ENCODE measurements at regions of chr5 and their contacts with region 1.

Region 1: GRCh38 chr5:138789771-138790242 is 36.6 kb downstream of the CTNNA1 start:
- DNase-seq: no peak
- ATAC-seq: peak; percentile 23
- H3K4me3 Mint-ChIP-seq: no peak overlapping the region
- H3K27ac Mint-ChIP-seq: no peak overlapping the region
- H3K4me1 Mint-ChIP-seq: peaks cover 16% of the 10 kb centered on the region
- H3K27me3 Mint-ChIP-seq: no peaks in the 10 kb centered on the region

Region 2: GRCh38 chr5:138469540-138470321 is 320.1 kb before region 1 on chr5:
- CTCF ChIA-PET with region 1: no interaction called
- DNase-seq: no peak
- ATAC-seq: no peak
- H3K4me3 Mint-ChIP-seq: no peak overlapping the region
- H3K27ac Mint-ChIP-seq: no peak overlapping the region
- H3K4me1 Mint-ChIP-seq: peaks cover 9% of the 10 kb centered on the region
- H3K27me3 Mint-ChIP-seq: peaks cover 23% of the 10 kb centered on the region

Region 3: GRCh38 chr5:138803285-138803684 is 13.5 kb after region 1 on chr5:
- CTCF ChIA-PET with region 1: interaction called, 14 read pairs
- DNase-seq: no peak
- ATAC-seq: no peak
- H3K4me3 Mint-ChIP-seq: no peak overlapping the region
- H3K27ac Mint-ChIP-seq: no peak overlapping the region
- H3K4me1 Mint-ChIP-seq: peaks cover 9% of the 10 kb centered on the region
- H3K27me3 Mint-ChIP-seq: no peaks in the 10 kb centered on the region

Region 4: GRCh38 chr5:138809391-138809790 is 19.6 kb after region 1 on chr5:
- CTCF ChIA-PET with region 1: interaction called, 10 read pairs
- DNase-seq: no peak
- ATAC-seq: no peak
- H3K4me3 Mint-ChIP-seq: no peak overlapping the region
- H3K27ac Mint-ChIP-seq: no peak overlapping the region
- H3K4me1 Mint-ChIP-seq: peaks cover 9% of the 10 kb centered on the region
- H3K27me3 Mint-ChIP-seq: no peaks in the 10 kb centered on the region

Region 5: DNA sequence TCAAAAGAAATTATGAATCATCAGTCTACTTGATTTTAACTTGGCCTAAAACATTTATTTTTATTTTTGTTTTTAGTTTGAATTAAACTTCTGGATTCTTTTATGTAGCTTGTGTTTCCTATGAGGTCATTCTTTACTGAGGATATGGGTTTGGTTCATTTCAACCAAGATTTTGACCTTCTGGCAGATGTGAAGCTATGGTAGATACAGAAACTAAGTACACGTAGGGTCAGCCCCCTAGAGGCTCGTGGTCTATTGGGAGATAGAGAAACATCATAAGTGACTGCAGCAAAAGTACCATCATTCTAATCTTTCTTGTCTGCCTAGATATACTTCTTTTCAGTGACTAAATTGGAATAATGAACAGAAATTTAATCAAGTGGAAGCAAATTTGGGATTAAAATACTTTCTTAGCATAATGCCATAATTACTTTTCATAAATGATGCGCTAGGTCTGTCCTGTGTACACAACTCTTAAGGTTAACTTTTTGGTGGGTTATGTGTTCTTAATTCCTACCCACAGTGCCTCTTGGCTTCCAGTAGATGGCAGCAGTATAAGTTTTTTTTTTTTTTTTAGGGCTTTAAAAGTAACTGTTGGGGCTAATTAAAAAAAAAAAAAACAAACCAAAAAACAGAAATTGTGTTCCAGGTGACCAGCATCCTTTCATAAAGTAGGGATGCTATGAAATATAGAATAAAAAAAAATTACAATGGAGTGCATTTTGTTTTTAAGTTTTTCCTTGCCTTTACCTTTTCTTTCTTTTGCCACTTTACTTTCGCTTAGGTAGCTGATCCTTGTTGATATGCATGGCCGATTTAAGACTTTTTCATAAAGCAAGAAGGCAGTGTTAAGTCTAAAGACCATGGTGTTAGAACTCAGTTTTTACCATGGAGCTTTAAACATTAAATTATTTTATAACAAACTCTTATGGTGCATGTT is 35.4 kb after region 1 on chr5:
- CTCF ChIA-PET with region 1: interaction called, 11 read pairs
- DNase-seq: no peak
- ATAC-seq: peak; percentile 30
- H3K4me3 Mint-ChIP-seq: no peak overlapping the region
- H3K27ac Mint-ChIP-seq: no peak overlapping the region
- H3K4me1 Mint-ChIP-seq: peaks cover 4% of the 10 kb centered on the region
- H3K27me3 Mint-ChIP-seq: no peaks in the 10 kb centered on the region

Measured in activated CD8-positive, alpha-beta memory T cell treated with anti-CD3 and anti-CD28 coated beads, Interleukin-2, amount 10 ng/mL, durations not matched to agents 7 days and 5 days (primary cell).